ENCODE measurements at regions of chr3 and their contacts with region 1.

Region 1: GRCh38 chr3:67531250-67532106 is 122.9 kb downstream of the SUCLG2 start:
- DNase-seq: no peak
- H3K4me3 ChIP-seq: no peak overlapping the region
- H3K27ac ChIP-seq: no peak overlapping the region
- H3K4me1 ChIP-seq: no peaks in the 10 kb centered on the region
- H3K27me3 ChIP-seq: no peaks in the 10 kb centered on the region
- CTCF ChIP-seq: no peak

Region 2: GRCh38 chr3:67384760-67385397 is 146.6 kb before region 1 on chr3:
- intact Hi-C with region 1: no loop called
- DNase-seq: peak; percentile 30
- H3K4me3 ChIP-seq: no peak overlapping the region
- H3K27ac ChIP-seq: no peak overlapping the region
- H3K4me1 ChIP-seq: no peaks in the 10 kb centered on the region
- H3K27me3 ChIP-seq: no peaks in the 10 kb centered on the region
- CTCF ChIP-seq: peak; percentile 34

Region 3: GRCh38 chr3:67610458-67610857 is 79.0 kb after region 1 on chr3:
- intact Hi-C with region 1: loop called (anchors 10 kb)
- DNase-seq: no peak
- H3K4me3 ChIP-seq: no peak overlapping the region
- H3K27ac ChIP-seq: no peak overlapping the region
- H3K4me1 ChIP-seq: no peaks in the 10 kb centered on the region
- H3K27me3 ChIP-seq: no peaks in the 10 kb centered on the region
- CTCF ChIP-seq: no peak

Measured in colonic mucosa (tissue), 4 donors.